Activated CD4-positive, alpha-beta T cell treated with anti-CD3 and anti-CD28 coated beads for 36 hours (primary cell): ENCODE measurements at regions of chr6 and their contacts with region 1.

Region 1: GRCh38 chr6:149431905-149432775 is 32.1 kb downstream of the SUMO4 start:
- DNase-seq: peak; percentile 95
- ATAC-seq: peak; percentile 98
- H3K4me3 Mint-ChIP-seq: no peak overlapping the region
- H3K27ac Mint-ChIP-seq: peak overlapping the region; percentile 59
- H3K4me1 Mint-ChIP-seq: peaks cover 4% of the 10 kb centered on the region
- H3K27me3 Mint-ChIP-seq: no peaks in the 10 kb centered on the region

Region 2: GRCh38 chr6:148548065-148548748 is 883.9 kb before region 1 on chr6:
- CTCF ChIA-PET with region 1: no interaction called
- POLR2A ChIA-PET with region 1: no interaction called
- intact Hi-C with region 1: no loop called
- DNase-seq: no peak
- ATAC-seq: no peak
- H3K4me3 Mint-ChIP-seq: no peak overlapping the region
- H3K27ac Mint-ChIP-seq: no peak overlapping the region
- H3K4me1 Mint-ChIP-seq: no peaks in the 10 kb centered on the region
- H3K27me3 Mint-ChIP-seq: peaks cover 6% of the 10 kb centered on the region

Region 3: GRCh38 chr6:148746363-148747144 is 685.6 kb before region 1 on chr6 and contains the start of gene UST:
- CTCF ChIA-PET with region 1: no interaction called
- POLR2A ChIA-PET with region 1: no interaction called
- intact Hi-C with region 1: loop called in 1 of 2 experiments (anchors 5 kb)
- DNase-seq: peak; percentile 79
- ATAC-seq: peak; percentile 59
- H3K4me3 Mint-ChIP-seq: peak within 1 kb of the TSS; percentile 87
- H3K27ac Mint-ChIP-seq: peak within 1 kb of the TSS; percentile 69
- H3K4me1 Mint-ChIP-seq: peaks cover 23% of the 10 kb centered on the region
- H3K27me3 Mint-ChIP-seq: peaks cover 40% of the 10 kb centered on the region
- total RNA-seq, gene UST: 2.2 to 2.8 TPM

Region 4: GRCh38 chr6:149082286-149082707 is 349.8 kb before region 1 on chr6:
- CTCF ChIA-PET with region 1: interaction called, 49 read pairs
- POLR2A ChIA-PET with region 1: no interaction called
- intact Hi-C with region 1: loop called (anchors 1 kb)
- DNase-seq: peak; percentile 94
- ATAC-seq: peak; percentile 79
- H3K4me3 Mint-ChIP-seq: no peak overlapping the region
- H3K27ac Mint-ChIP-seq: peak overlapping the region; percentile 52
- H3K4me1 Mint-ChIP-seq: peaks cover 51% of the 10 kb centered on the region
- H3K27me3 Mint-ChIP-seq: no peaks in the 10 kb centered on the region

Region 5: GRCh38 chr6:149316798-149317655 is 115.1 kb before region 1 on chr6:
- CTCF ChIA-PET with region 1: interaction called, 4 read pairs
- POLR2A ChIA-PET with region 1: interaction called, 4 read pairs
- intact Hi-C with region 1: loop called in 1 of 2 experiments (anchors 2 kb)
- DNase-seq: peak; percentile 94
- ATAC-seq: peak; percentile 71
- H3K4me3 Mint-ChIP-seq: peak overlapping the region; percentile 88
- H3K27ac Mint-ChIP-seq: peak overlapping the region; percentile 92
- H3K4me1 Mint-ChIP-seq: peaks cover 23% of the 10 kb centered on the region
- H3K27me3 Mint-ChIP-seq: no peaks in the 10 kb centered on the region

Region 6: DNA sequence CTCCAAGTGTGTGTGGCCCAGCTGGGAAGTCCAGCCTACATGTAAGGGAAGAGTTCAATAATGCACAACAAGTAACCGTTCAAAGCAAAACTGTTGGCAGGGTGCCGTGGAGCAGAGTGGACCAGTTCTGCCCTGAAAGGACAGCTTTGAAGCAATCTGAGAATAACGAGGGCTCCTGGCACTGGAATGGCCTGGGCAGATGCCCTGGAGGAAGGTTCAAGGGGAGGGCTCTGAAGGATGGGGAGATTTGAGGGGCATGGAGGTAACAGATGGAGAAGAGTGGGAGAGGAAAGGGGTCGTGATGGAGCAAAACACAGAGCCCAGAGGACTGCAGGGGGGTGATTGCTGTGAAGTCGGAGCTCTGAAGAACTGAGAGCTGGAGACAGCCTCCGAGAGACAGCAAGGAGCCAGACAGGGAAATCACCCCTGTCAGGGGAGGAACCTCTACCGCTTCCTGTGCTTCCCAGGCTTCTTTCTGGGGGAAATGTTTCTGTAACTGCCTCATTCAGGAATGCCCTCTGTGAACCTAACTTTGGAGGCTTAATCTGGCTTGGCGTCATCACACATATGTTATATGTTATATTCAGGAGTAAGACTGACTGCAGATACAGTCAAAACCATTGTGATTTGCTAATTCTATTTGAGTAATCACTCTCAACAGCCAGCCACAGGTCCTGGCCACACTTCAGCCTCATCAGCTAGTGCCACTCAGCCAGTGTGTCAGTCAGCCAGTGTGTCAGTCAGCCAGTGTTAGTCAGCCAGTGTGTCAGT is 11.5 kb after region 1 on chr6:
- CTCF ChIA-PET with region 1: interaction called, 18 read pairs
- POLR2A ChIA-PET with region 1: no interaction called
- intact Hi-C with region 1: no loop called
- DNase-seq: peak; percentile 43
- ATAC-seq: peak; percentile 35
- H3K4me3 Mint-ChIP-seq: no peak overlapping the region
- H3K27ac Mint-ChIP-seq: no peak overlapping the region
- H3K4me1 Mint-ChIP-seq: peaks cover 10% of the 10 kb centered on the region
- H3K27me3 Mint-ChIP-seq: no peaks in the 10 kb centered on the region

Region 7: GRCh38 chr6:149513915-149514314 is 81.8 kb after region 1 on chr6:
- CTCF ChIA-PET with region 1: interaction called, 29 read pairs
- POLR2A ChIA-PET with region 1: no interaction called
- intact Hi-C with region 1: loop called (anchors 1 kb)
- DNase-seq: no peak
- ATAC-seq: no peak
- H3K4me3 Mint-ChIP-seq: no peak overlapping the region
- H3K27ac Mint-ChIP-seq: no peak overlapping the region
- H3K4me1 Mint-ChIP-seq: peaks cover 55% of the 10 kb centered on the region
- H3K27me3 Mint-ChIP-seq: no peaks in the 10 kb centered on the region